CD8-positive, alpha-beta T cell (primary cell): ENCODE measurements at regions of chr16 and their contacts with region 1.

Region 1: DNA sequence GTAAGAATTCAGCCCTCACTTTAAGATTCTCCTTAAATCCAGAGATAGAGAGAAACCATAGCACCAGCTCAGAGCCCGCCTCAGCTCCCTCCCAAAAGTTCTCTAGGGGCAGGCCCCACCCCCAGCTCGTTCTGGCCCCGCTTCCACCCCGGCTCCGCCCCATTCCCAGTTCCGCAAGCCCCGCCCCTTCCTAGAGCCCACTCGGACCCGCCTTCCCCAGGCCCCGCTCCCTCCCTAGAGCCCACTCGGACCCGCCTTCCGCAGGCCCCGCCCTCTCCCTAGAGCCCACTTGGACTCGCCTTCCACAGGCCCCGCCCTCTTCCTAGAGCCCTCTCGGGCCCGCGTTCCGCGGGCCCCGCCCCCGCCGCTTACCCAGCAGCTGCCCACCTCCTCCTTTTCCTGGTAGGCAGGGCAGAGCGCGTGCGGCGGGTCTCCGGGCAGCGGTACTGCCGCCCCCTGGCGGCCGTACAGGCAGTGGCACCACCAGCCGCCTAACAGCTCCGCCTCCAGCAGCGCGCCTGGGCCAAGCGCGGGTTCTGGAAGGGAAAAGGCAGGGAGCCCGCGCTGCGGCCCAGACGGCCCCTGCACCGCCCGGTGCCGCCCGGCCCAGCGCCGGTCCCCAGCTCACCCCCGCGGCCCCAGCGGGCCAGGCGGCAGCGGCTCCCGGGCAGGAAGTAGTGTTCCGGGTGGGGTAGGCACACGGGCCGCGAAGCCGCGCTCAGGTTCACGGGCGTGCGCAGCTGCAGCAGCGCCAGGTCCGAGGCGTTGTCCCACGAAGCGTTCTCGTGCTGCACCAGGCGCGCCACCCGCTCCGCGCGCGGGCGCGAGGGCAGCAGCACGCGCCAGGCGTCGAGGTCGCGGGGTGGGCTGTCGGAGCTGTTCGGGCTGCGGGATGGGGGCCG is 6.8 kb upstream of the PRSS8 start:
- DNase-seq: peak; percentile 90 to 98 (median 95)
- ATAC-seq: peak; percentile 91
- H3K4me3 ChIP-seq: peak overlapping the region; percentile 35 to 66
- H3K4me3 Mint-ChIP-seq: peak overlapping the region; percentile 69
- H3K27ac ChIP-seq: peak overlapping the region; percentile 42 to 67
- H3K27ac Mint-ChIP-seq: peak overlapping the region; percentile 77
- H3K4me1 ChIP-seq: peaks cover 16% of the 10 kb centered on the region
- H3K4me1 Mint-ChIP-seq: peaks cover 14% of the 10 kb centered on the region
- H3K27me3 ChIP-seq: no peaks in the 10 kb centered on the region
- H3K27me3 Mint-ChIP-seq: no peaks in the 10 kb centered on the region
- CTCF ChIP-seq: peak; percentile 84

Region 2: DNA sequence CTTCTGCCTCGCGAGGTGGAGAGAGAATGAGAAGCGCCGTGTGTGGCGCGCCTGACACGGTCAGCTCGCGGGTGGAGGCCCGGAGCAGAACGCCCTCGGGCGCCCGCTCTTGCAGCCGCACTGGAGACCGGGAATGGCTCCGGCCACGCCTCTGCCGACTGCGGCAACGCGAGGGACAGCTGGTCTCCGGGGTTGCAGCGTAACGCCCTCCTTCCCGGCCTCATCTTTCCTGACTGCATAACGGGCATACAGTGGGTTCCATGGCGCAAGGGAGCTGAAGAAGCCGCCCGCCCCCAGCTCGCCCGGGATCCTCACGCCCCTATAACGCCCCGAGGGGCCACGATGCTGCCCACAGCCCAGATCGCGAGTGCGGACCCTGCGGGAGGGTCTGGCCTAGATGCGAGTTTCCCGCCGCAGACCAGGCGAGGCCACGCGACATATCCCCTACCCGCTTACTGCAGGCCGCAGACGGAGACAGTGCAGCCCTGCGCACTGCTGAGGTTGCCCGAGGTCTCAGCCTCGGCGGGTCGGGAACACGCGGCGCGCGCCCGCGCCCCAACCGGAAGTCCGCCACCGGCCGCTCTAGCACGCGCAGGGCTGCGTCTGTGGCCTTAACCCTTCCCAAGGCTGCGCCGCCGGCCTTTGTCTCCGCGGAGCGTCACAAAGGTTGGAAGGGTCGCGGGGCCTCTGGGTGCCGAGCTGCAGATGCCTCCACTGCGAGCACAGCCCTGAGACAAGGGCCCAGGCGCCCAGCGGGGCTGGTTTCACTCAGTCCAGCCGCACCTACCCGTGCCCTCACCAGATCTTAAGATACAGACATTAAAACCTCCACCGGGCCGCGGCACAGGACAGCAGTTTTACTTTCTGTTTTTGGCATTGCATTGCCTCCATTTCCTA is 267.3 kb before region 1 on chr16:
- CTCF ChIA-PET with region 1: no interaction called
- POLR2A ChIA-PET with region 1: no interaction called
- intact Hi-C with region 1: no loop called
- DNase-seq: peak; percentile 78 to 95 (median 89)
- ATAC-seq: peak; percentile 78
- H3K4me3 ChIP-seq: peak overlapping the region; percentile 87 to 97
- H3K4me3 Mint-ChIP-seq: peak overlapping the region; percentile 90
- H3K27ac ChIP-seq: peak overlapping the region; percentile 84 to 94
- H3K27ac Mint-ChIP-seq: peak overlapping the region; percentile 96
- H3K4me1 ChIP-seq: peaks cover 24% of the 10 kb centered on the region
- H3K4me1 Mint-ChIP-seq: peaks cover 29% of the 10 kb centered on the region
- H3K27me3 ChIP-seq: no peaks in the 10 kb centered on the region
- H3K27me3 Mint-ChIP-seq: no peaks in the 10 kb centered on the region
- CTCF ChIP-seq: no peak

Region 3: GRCh38 chr16:30893744-30894539 is 248.4 kb before region 1 on chr16 and contains the start of gene BCL7C:
- CTCF ChIA-PET with region 1: no interaction called
- POLR2A ChIA-PET with region 1: no interaction called
- intact Hi-C with region 1: no loop called
- DNase-seq: peak; percentile 33 to 88 (median 78)
- ATAC-seq: peak; percentile 73
- H3K4me3 ChIP-seq: peak within 1 kb of the TSS; percentile 72 to 85
- H3K4me3 Mint-ChIP-seq: peak within 1 kb of the TSS; percentile 88
- H3K27ac ChIP-seq: peak within 1 kb of the TSS; percentile 45 to 83
- H3K27ac Mint-ChIP-seq: peak within 1 kb of the TSS; percentile 92
- H3K4me1 ChIP-seq: peaks cover 33% of the 10 kb centered on the region
- H3K4me1 Mint-ChIP-seq: peaks cover 43% of the 10 kb centered on the region
- H3K27me3 ChIP-seq: no peaks in the 10 kb centered on the region
- H3K27me3 Mint-ChIP-seq: no peaks in the 10 kb centered on the region
- CTCF ChIP-seq: no peak
- total RNA-seq, gene BCL7C: 16.0 to 16.2 TPM

Region 4: GRCh38 chr16:30997000-30997886 is 145.1 kb before region 1 on chr16:
- CTCF ChIA-PET with region 1: interaction called, 3 read pairs
- POLR2A ChIA-PET with region 1: no interaction called
- intact Hi-C with region 1: loop called (anchors 1 to 2 kb)
- DNase-seq: peak; percentile 67 to 88 (median 80)
- ATAC-seq: peak; percentile 99
- H3K4me3 ChIP-seq: peak overlapping the region; percentile 61 to 93
- H3K4me3 Mint-ChIP-seq: peak overlapping the region; percentile 85
- H3K27ac ChIP-seq: peak overlapping the region; percentile 40 to 55
- H3K27ac Mint-ChIP-seq: peak overlapping the region; percentile 90
- H3K4me1 ChIP-seq: peaks cover 11% of the 10 kb centered on the region
- H3K4me1 Mint-ChIP-seq: peaks cover 10% of the 10 kb centered on the region
- H3K27me3 ChIP-seq: no peaks in the 10 kb centered on the region
- H3K27me3 Mint-ChIP-seq: no peaks in the 10 kb centered on the region
- CTCF ChIP-seq: no peak

Region 5: DNA sequence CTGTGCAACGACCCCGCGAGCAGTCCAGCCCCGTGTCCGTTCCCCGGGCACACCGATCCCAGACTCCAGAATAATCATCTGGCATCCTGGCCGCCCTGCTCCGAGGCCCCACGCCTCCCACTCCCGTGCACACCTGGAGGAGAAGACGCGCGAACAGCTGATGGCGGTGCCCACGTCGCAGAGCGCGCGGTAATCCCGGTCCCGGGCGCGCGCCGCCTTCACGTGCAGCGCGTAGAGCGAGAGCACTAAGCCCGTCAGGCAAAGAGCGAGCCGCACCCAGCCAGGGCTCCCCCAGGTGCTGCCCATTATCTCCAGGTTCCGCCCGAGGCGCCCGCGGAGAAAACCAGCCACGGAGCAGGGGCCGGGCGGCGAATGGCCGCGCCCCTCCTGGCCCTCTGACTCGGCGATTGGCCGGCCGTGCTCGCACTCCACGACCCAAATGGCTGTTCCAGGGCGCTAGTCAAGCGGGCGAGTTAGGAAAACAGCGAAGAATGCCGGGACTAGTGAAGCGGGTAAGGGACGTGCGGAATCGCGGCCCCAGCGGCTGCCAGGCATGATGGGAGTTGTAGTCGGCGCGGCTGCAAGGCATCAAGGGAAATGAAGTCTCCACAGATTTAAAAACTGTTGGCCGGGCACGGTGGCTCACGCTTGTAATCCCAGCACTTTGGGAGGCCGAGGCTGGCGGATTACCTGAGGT is 47.8 kb before region 1 on chr16 and contains the start of gene VKORC1:
- CTCF ChIA-PET with region 1: interaction called, 6 read pairs
- POLR2A ChIA-PET with region 1: interaction called, 3 read pairs
- intact Hi-C with region 1: loop called in 1 of 2 experiments (anchors 1 kb)
- DNase-seq: peak; percentile 65 to 93 (median 85)
- ATAC-seq: peak; percentile 86
- H3K4me3 ChIP-seq: peak within 1 kb of the TSS; percentile 72 to 91
- H3K4me3 Mint-ChIP-seq: peak within 1 kb of the TSS; percentile 93
- H3K27ac ChIP-seq: peak within 1 kb of the TSS; percentile 69 to 74
- H3K27ac Mint-ChIP-seq: peak within 1 kb of the TSS; percentile 91
- H3K4me1 ChIP-seq: peaks cover 19% of the 10 kb centered on the region
- H3K4me1 Mint-ChIP-seq: peaks cover 25% of the 10 kb centered on the region
- H3K27me3 ChIP-seq: no peaks in the 10 kb centered on the region
- H3K27me3 Mint-ChIP-seq: no peaks in the 10 kb centered on the region
- CTCF ChIP-seq: no peak
- total RNA-seq, gene VKORC1: 23.0 to 27.2 TPM

Region 6: DNA sequence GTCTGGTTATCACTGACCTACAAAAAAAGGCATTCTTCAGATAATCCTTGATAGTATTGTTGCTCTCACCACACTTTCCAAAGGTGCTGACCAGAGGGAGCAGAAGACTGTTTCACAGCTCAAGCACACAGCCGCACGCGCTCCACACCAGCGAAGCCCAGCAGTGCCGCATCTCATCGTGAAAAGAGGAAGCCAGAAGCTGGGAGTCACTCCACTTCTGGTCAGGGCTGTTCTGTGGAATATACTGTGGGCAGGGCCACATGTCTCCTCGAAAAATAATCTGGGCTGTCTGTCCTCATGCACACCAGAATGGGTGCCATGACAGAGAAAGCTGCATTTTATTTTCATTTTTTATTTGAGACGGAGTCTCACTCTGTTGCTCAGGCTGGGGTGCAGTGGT is 14.8 kb after region 1 on chr16:
- CTCF ChIA-PET with region 1: interaction called, 22 read pairs
- POLR2A ChIA-PET with region 1: interaction called, 11 read pairs
- intact Hi-C with region 1: no loop called
- DNase-seq: no peak
- ATAC-seq: no peak
- H3K4me3 ChIP-seq: no peak overlapping the region
- H3K4me3 Mint-ChIP-seq: no peak overlapping the region
- H3K27ac ChIP-seq: no peak overlapping the region
- H3K27ac Mint-ChIP-seq: no peak overlapping the region
- H3K4me1 ChIP-seq: no peaks in the 10 kb centered on the region
- H3K4me1 Mint-ChIP-seq: peaks cover 12% of the 10 kb centered on the region
- H3K27me3 ChIP-seq: no peaks in the 10 kb centered on the region
- H3K27me3 Mint-ChIP-seq: peaks cover under 1% of the 10 kb centered on the region
- CTCF ChIP-seq: no peak

Region 7: DNA sequence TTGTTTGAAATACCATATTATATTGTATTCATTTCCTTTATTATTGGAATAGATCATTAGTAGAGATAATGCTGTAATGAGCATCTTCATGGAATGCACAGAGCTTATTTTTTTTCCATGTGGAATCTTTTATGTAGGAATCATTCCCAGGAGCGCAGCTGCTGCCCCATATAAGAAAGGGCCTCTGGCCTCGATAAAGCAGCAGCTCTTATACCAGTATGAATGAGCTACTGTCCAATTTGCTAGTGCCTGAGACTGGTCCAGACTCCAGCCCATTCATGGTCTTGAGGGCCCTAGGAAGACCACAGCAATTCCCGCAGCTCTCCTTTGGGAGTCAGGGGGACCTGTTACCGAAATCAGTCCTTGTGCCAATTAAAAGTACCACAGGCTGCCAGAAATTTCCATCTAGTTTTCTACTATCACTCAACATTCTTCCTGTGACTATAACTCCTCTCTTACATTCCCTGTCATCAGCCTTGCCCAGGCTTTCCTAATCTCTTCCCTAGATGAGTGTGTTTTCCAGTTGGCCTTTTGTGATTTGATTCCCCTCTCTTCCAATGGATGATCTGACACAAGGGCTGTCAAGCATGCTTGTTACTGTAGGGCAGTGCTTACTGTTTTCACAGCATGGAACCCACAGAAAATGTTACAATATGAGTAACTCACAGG is 298.3 kb after region 1 on chr16:
- CTCF ChIA-PET with region 1: interaction called, 11 read pairs
- POLR2A ChIA-PET with region 1: no interaction called
- intact Hi-C with region 1: no loop called
- DNase-seq: no peak
- ATAC-seq: no peak
- H3K4me3 ChIP-seq: no peak overlapping the region
- H3K4me3 Mint-ChIP-seq: no peak overlapping the region
- H3K27ac ChIP-seq: no peak overlapping the region
- H3K27ac Mint-ChIP-seq: no peak overlapping the region
- H3K4me1 ChIP-seq: peaks cover 4% of the 10 kb centered on the region
- H3K4me1 Mint-ChIP-seq: peaks cover 6% of the 10 kb centered on the region
- H3K27me3 ChIP-seq: no peaks in the 10 kb centered on the region
- H3K27me3 Mint-ChIP-seq: no peaks in the 10 kb centered on the region
- CTCF ChIP-seq: no peak